GM12878 (cell line): ENCODE measurements at regions of chr14 and their contacts with region 1.

Region 1: DNA sequence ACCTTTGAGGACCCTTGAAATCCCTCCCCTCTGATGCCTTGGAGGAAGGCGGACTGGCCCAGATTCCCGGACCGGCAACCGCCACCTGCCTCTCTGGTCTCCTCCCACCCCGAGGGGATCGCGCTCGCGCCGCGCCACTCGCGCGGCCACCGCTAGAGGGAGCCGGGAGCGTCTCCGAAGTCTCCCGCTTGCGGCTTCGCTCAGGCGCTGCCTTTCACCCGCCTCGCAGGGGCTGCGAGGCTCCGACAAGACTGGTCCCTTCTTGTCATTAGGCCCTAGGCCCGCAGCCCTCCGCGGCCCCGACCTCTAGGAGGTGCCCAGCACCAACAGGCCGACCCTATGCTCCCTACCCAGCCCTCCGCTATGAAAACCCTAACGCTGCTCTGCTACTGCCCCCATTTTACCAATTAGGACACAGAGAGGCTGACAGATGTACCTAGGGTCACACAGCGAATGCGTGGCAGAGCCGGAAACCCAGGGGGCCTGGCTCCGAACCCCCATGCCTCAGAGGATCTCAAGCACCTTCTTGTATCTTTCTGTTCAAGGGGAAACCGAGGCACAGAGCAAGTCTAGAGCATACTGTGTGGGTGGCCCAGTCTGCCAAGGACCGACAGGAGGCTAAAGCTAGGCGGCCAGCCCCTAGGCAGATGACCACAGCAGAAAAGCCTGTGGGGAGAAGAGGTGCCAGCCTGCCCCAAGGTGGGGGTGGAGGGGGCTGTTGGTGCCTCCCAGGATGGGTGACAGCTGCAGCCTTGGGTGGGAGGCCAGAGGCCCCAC is 21.4 kb upstream of the VSX2 start:
- DNase-seq: no peak
- ATAC-seq: peak; percentile 99
- H3K4me3 ChIP-seq: no peak overlapping the region
- H3K27ac ChIP-seq: no peak overlapping the region
- H3K4me1 ChIP-seq: no peaks in the 10 kb centered on the region
- H3K27me3 ChIP-seq: no peaks in the 10 kb centered on the region
- CTCF ChIP-seq: peak; percentile 83 to 99 (median 94)
- EP300 ChIP-seq: no peak
- POLR2A ChIP-seq: no peak
- RAD21 ChIP-seq: peak; percentile 46

Region 2: DNA sequence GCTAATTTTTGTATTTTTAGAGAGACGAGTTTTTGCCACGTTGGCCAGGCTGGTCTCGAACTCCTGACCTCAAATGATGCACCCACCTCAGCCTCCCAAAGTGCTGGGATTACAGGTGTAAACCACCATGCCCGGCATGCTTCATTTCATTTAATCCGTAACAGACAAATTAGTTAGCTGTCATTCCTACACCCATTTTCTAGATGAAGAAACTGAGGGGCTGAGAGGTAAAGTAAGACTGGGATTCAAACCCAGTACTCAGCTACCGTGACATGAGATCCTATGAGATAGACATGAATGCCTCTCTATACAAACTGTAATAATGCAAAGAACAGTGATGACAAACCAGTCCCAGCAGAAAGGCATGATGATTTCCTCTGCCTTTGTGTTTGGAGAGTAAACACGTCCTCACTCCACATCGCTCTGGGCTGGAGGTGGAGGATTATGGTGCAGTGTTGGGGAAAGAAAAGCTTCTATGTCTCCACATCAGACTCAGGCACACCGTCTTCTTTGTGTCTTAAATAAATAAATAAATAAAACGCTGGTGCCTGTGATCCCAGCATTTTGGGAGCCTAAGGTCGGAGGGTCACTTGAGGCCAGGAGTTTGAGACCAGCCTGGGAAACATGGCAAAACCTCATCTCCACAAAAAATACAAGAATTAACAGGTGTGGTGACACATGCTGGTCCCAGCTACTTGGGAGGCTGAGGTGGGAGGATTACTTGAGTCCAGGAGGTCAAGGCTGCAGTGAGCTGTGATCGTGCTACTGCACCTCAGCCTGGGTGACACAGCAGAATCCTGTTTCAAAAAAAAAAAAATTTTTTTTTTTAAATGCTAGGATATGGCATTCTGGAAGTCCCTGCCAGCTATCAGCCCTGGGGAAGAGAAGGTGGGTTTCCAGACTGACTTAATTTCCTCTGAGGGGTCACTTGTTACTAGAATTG is 31.8 kb after region 1 on chr14:
- CTCF ChIA-PET with region 1: interaction called, 11 read pairs
- POLR2A ChIA-PET with region 1: no interaction called
- RAD21 ChIA-PET with region 1: no interaction called
- SMC1A ChIA-PET with region 1: interaction called, 3 read pairs
- in situ Hi-C with region 1: no loop called
- intact Hi-C with region 1: loop called (anchors 1 kb)
- DNase-seq: no peak
- ATAC-seq: no peak
- H3K4me3 ChIP-seq: no peak overlapping the region
- H3K27ac ChIP-seq: no peak overlapping the region
- H3K4me1 ChIP-seq: no peaks in the 10 kb centered on the region
- H3K27me3 ChIP-seq: peaks cover 0 to 1% of the 10 kb centered on the region in 2 experiments; a peak in 2 of 4 replicates
- CTCF ChIP-seq: no peak
- EP300 ChIP-seq: no peak
- POLR2A ChIP-seq: no peak
- RAD21 ChIP-seq: no peak

Region 3: DNA sequence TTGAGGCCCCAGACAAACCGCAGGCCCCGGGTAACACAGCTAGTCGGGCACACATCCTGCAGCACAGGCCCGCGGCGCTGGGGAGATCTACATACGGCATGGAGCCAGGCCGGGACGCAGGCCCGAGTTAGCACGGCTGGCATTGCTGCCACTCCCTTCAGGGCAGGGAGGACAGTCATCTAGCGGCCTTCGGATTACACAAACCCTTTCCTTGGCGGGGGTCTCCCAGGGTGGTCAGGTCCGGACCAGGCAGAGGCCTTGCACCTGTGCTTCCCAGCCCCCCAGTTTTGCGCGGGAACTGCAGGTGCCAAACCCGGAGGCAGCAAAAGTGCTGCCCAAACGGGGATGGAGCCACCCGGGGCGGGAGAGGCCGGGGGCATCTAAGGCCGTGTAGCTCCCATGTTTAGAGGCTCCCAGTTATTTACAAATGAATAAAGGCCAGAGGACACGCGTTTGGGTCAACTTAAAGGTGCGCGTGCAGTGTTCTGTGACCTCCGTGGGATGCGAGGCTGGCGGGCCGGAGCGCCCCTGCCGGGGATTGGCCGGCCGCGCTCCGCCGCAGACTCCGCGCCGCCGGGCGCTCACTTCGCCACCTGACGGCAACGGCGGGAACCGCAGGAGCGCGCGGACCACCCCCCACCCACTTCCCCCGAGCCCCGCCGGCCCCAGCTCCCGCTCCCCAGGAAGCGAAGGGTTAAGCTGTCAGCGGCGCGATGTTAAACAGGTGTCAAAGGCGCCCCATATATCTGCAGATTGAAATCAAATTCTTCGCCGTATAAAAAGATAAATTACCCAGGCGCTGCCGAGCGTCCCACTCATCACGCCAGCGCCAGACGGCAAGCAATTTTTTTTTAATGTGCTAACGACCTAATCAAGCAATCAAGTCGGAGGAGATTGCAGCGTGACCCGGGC is 39.5 kb after region 1 on chr14:
- CTCF ChIA-PET with region 1: interaction called, 11 read pairs
- POLR2A ChIA-PET with region 1: no interaction called
- RAD21 ChIA-PET with region 1: no interaction called
- SMC1A ChIA-PET with region 1: interaction called, 3 read pairs
- in situ Hi-C with region 1: no loop called
- intact Hi-C with region 1: no loop called
- DNase-seq: no peak
- ATAC-seq: peak; percentile 96
- H3K4me3 ChIP-seq: peak overlapping the region; percentile 68
- H3K27ac ChIP-seq: no peak overlapping the region
- H3K4me1 ChIP-seq: peaks cover 6% of the 10 kb centered on the region
- H3K27me3 ChIP-seq: peaks cover 3 to 4% of the 10 kb centered on the region in 2 experiments; a peak in 3 of 4 replicates
- CTCF ChIP-seq: peak; percentile 81 to 88 (median 85)
- EP300 ChIP-seq: no peak
- POLR2A ChIP-seq: no peak
- RAD21 ChIP-seq: peak; percentile 37; the same call in 1 of the 2 replicates

Region 4: GRCh38 chr14:74290415-74290814 is 72.6 kb after region 1 on chr14:
- CTCF ChIA-PET with region 1: no interaction called
- POLR2A ChIA-PET with region 1: no interaction called
- RAD21 ChIA-PET with region 1: no interaction called
- SMC1A ChIA-PET with region 1: no interaction called
- in situ Hi-C with region 1: no loop called
- intact Hi-C with region 1: no loop called
- DNase-seq: no peak
- ATAC-seq: peak; percentile 27
- H3K4me3 ChIP-seq: no peak overlapping the region
- H3K27ac ChIP-seq: no peak overlapping the region
- H3K4me1 ChIP-seq: no peaks in the 10 kb centered on the region
- H3K27me3 ChIP-seq: no peaks in the 10 kb centered on the region
- CTCF ChIP-seq: peak in 2 of 3 experiments; percentile 20 to 25; a peak in 4 of 6 replicates
- EP300 ChIP-seq: no peak
- POLR2A ChIP-seq: no peak
- RAD21 ChIP-seq: no peak